ENCODE measurements at regions of chr9 and their contacts with region 1.

Region 1: GRCh38 chr9:92716557-92716956 is 46.6 kb upstream of the IPPK start:
- DNase-seq: peak; percentile 89
- H3K4me3 Mint-ChIP-seq: no peak overlapping the region
- H3K27ac Mint-ChIP-seq: no peak overlapping the region
- H3K4me1 Mint-ChIP-seq: peaks cover 21% of the 10 kb centered on the region
- H3K27me3 Mint-ChIP-seq: no peaks in the 10 kb centered on the region

Region 2: GRCh38 chr9:92790542-92791527 is 74.3 kb after region 1 on chr9:
- CTCF ChIA-PET with region 1: interaction called, 108 read pairs
- DNase-seq: peak; percentile 85
- H3K4me3 Mint-ChIP-seq: no peak overlapping the region
- H3K27ac Mint-ChIP-seq: no peak overlapping the region
- H3K4me1 Mint-ChIP-seq: peaks cover 6% of the 10 kb centered on the region
- H3K27me3 Mint-ChIP-seq: peaks cover 28% of the 10 kb centered on the region

Region 3: GRCh38 chr9:92887880-92888338 is 171.4 kb after region 1 on chr9:
- CTCF ChIA-PET with region 1: no interaction called
- DNase-seq: peak; percentile 57
- H3K4me3 Mint-ChIP-seq: no peak overlapping the region
- H3K27ac Mint-ChIP-seq: peak overlapping the region; percentile 72
- H3K4me1 Mint-ChIP-seq: peaks cover 34% of the 10 kb centered on the region
- H3K27me3 Mint-ChIP-seq: peaks cover 21% of the 10 kb centered on the region

Region 4: GRCh38 chr9:93108291-93109041 is 391.9 kb after region 1 on chr9:
- CTCF ChIA-PET with region 1: no interaction called
- DNase-seq: peak; percentile 48
- H3K4me3 Mint-ChIP-seq: no peak overlapping the region
- H3K27ac Mint-ChIP-seq: peak overlapping the region; percentile 73
- H3K4me1 Mint-ChIP-seq: peaks cover 54% of the 10 kb centered on the region
- H3K27me3 Mint-ChIP-seq: no peaks in the 10 kb centered on the region

Measured in activated naive CD4-positive, alpha-beta T cell treated with anti-CD3 and anti-CD28 coated beads, Interleukin-2, amount 10 ng/mL, durations not matched to agents 7 days and 5 days (primary cell).